Dorsolateral prefrontal cortex (tissue), 120 donors: ENCODE measurements at regions of chr13 and their contacts with region 1.

Region 1: GRCh38 chr13:112066624-112067004 is 335 bp upstream of the SOX1 start:
- DNase-seq: peak in 8 of 10 donors; percentile 27 to 82 (median 70)
- H3K4me3 ChIP-seq: peak overlapping the region in 57 of 59 donors; percentile 7 to 64 (median 45)
- H3K27ac ChIP-seq: peak overlapping the region in 20 of 59 donors; percentile 18 to 70 (median 52)
- H3K27me3 ChIP-seq: peaks cover 4 to 95% (median 84%) of the 10 kb centered on the region in 45 donors
- CTCF ChIP-seq: peak in 1 of 56 donors; percentile 3

Region 2: DNA sequence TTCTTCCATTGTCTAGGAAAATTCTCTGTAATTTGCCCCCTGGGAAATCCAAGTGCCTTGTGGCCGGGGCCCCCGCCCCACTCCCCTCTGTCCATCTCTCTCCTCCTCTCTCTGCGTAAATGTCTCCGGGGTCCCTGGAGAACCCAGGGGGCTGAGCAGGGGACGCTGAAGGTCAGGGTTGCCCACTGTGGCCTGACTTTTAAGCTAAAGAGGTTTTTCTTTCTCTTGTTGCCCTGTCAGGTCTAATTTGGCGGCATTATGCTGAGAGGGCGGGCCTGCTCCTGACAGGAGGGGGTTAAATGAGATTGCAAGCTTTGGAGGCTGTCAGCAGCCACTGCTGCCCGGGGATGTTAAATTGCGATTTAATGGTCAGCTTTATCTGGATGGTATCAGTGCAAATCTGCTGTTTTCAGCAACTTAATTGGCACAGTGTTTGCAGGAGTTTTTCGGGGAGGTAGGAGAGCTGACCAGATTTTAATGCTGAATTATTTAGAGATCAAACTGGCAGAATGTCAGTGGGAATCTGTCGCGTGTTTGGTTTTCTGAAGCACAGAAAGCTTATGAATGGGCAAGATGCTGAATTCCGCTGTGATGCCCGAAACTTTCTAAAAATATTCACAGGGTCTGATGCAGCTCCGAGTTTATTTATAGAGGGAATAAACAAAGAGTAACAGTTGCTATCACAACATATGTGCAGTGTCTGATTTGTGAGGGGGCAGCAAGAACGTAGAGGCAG is 92.8 kb before region 1 on chr13:
- intact Hi-C with region 1: loop called in 1 of 2 experiments (anchors 10 kb)
- DNase-seq: no peak
- H3K4me3 ChIP-seq: peak overlapping the region in 38 of 59 donors; percentile 1 to 57 (median 26)
- H3K27ac ChIP-seq: peak overlapping the region in 2 of 59 donors; percentile 16 to 24
- H3K27me3 ChIP-seq: peaks cover 0 to 63% (median 17%) of the 10 kb centered on the region in 45 donors
- CTCF ChIP-seq: no peak

Region 3: DNA sequence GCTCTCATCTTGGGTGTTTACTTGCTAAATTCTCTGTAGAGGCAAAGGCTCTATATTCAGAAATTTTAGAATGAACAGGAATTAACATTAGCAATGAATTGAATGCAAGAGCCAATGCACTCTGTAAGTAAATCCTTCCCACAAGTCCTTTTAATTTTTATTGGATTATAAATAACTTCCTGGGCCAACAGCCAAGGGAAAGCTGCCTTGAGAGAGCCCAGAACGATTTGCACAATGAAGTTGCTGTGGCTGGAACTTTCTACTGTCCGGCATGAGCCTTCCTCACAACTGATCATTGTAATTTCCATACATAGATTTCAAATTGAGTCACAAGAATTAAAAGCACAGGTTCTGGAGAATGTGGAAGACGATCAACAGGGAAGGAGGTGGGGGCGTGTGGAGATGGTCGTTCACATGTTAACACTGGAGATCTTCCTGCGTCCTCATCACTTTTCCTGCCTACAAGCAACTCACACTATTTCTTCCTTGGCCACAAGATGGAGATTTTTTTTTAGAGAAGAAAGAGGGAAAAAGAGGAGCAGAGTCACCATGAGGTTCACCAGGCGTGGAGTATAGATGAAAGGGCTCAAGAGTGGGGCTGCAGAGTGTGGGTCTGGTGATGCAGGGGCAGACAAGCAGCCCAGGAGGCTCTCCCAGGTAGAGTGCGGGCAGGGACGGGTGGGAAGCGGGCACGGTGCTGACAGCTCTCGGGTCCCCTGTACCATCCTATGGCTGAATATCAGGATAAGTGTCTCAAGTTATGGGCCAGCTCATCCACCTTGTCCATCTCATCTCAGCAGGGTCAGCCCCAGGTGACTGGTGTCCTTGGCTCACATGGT is 111.1 kb after region 1 on chr13:
- intact Hi-C with region 1: no loop called
- DNase-seq: peak in 1 of 10 donors; percentile 23
- H3K4me3 ChIP-seq: no peak overlapping the region
- H3K27ac ChIP-seq: no peak overlapping the region
- H3K27me3 ChIP-seq: peaks cover 0 to 29% (median 6%) of the 10 kb centered on the region in 45 donors
- CTCF ChIP-seq: no peak